ENCODE measurements at regions of chr2 and their contacts with region 1.

Region 1: DNA sequence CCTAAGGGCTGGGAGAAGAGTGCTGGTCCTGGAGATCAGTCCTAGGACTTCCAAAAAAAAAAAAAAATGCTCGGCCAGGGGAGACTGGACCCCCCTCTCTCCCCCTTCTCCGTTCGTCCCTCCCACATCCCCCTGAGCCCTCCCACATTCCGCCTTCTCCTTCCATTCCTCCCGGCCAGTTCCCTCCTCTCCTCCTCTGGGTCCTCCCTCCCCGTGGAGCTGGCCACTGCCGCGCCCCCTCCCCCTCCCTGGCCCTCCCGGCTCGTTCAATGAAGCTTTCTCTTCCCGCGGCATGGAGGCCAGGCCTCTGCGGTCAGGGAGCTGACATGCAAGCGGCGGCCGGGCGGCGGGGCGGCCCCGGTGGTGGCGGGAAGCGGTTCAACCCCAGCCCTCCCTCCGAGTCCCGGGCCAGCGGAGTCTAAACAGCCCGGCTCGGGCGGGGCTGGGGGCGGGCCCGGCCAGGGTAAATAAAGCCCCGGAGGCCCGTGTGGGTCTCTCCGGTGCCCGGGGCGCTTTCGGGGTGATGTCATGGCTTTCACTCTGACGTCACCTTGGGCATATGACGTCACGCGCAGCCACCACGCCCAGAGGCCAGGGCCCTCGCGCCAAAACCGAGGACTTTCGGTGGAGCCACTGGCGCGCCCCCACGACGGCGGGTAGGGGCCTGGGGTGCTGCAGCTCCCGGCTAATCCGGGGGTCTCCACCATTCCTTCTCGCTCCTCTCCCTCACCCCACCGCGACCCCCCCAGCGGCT is at the start of gene LOXL3:
- DNase-seq: peak; percentile 93
- ATAC-seq: peak; percentile 48
- H3K4me3 ChIP-seq: peak within 1 kb of the TSS; percentile 51 to 99 (median 84)
- H3K4me3 Mint-ChIP-seq: peak within 1 kb of the TSS; percentile 96
- H3K27ac ChIP-seq: peak within 1 kb of the TSS; percentile 64 to 76
- H3K27ac Mint-ChIP-seq: peak within 1 kb of the TSS; percentile 94
- H3K4me1 ChIP-seq: peaks cover 16 to 39% of the 10 kb centered on the region in 2 donors
- H3K4me1 Mint-ChIP-seq: peaks cover 24% of the 10 kb centered on the region
- H3K27me3 ChIP-seq: peaks cover 0 to 15% (median 8%) of the 10 kb centered on the region in 4 experiments
- H3K27me3 Mint-ChIP-seq: no peaks in the 10 kb centered on the region
- CTCF ChIP-seq: no peak
- total RNA-seq, gene LOXL3: 0.66 and 1.2 TPM in 2 replicates

Region 2: GRCh38 chr2:74507145-74507925 is 46.7 kb before region 1 on chr2 and contains the start of gene PCGF1:
- CTCF ChIA-PET with region 1: interaction called, 4 read pairs
- POLR2A ChIA-PET with region 1: no interaction called
- intact Hi-C with region 1: loop called (anchors 1 kb)
- DNase-seq: peak; percentile 100
- ATAC-seq: peak; percentile 85
- H3K4me3 ChIP-seq: peak within 1 kb of the TSS; percentile 78 to 97 (median 83)
- H3K4me3 Mint-ChIP-seq: peak within 1 kb of the TSS; percentile 96
- H3K27ac ChIP-seq: peak within 1 kb of the TSS; percentile 91 to 96
- H3K27ac Mint-ChIP-seq: peak within 1 kb of the TSS; percentile 99
- H3K4me1 ChIP-seq: peaks cover 31 to 38% of the 10 kb centered on the region in 2 donors
- H3K4me1 Mint-ChIP-seq: peaks cover 56% of the 10 kb centered on the region
- H3K27me3 ChIP-seq: peaks cover 0 to 56% (median 14%) of the 10 kb centered on the region in 4 experiments
- H3K27me3 Mint-ChIP-seq: peaks cover 41% of the 10 kb centered on the region
- CTCF ChIP-seq: peak; percentile 64
- total RNA-seq, gene PCGF1: 34.3 and 40.1 TPM in 2 replicates

Region 3: GRCh38 chr2:74573747-74574562 is 19.9 kb after region 1 on chr2:
- CTCF ChIA-PET with region 1: interaction called, 4 read pairs
- POLR2A ChIA-PET with region 1: interaction called, 8 read pairs
- intact Hi-C with region 1: loop called (anchors 1 kb)
- DNase-seq: peak; percentile 69
- ATAC-seq: peak; percentile 69
- H3K4me3 ChIP-seq: peak overlapping the region in 4 of 5 experiments; percentile 21 to 34 (median 32)
- H3K4me3 Mint-ChIP-seq: peak overlapping the region; percentile 84
- H3K27ac ChIP-seq: peak overlapping the region; percentile 9 to 74
- H3K27ac Mint-ChIP-seq: peak overlapping the region; percentile 92
- H3K4me1 ChIP-seq: peaks cover 58 to 68% of the 10 kb centered on the region in 2 donors
- H3K4me1 Mint-ChIP-seq: peaks cover 46% of the 10 kb centered on the region
- H3K27me3 ChIP-seq: no peaks in the 10 kb centered on the region
- H3K27me3 Mint-ChIP-seq: no peaks in the 10 kb centered on the region
- CTCF ChIP-seq: no peak

Region 4: DNA sequence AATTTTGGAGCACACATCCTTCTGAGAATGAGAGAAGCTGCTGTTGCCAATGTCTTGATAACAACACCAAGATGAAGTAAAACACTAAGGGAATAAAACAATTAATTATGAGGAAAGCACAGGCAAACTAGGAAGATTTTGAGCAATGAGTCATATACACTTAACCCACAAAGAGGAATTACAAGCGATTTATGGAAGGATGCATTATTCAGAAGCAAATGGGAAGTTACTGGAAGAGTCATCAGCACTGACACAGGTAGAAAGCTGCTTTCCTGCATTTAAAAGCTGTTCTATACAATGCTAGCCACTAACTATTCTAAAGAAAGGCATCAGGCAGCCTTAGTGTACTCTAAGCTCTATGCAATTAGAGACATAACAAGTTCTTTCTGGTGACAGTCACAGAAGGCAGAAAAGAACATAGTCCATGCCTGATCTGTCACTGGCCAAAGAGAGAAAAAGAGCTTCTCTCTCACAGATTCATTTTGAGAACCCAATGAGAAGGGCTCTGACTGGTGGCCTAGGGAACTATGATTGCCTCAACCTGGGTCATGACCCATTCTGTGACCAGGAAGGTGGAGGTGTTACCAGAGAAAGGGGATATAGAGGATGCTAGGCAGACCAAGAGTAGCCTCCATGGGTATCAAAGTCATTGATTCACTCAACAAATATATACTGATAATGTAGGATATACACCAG is 48.7 kb after region 1 on chr2:
- CTCF ChIA-PET with region 1: no interaction called
- POLR2A ChIA-PET with region 1: interaction called, 12 read pairs
- intact Hi-C with region 1: no loop called
- DNase-seq: no peak
- ATAC-seq: no peak
- H3K4me3 ChIP-seq: no peak overlapping the region
- H3K4me3 Mint-ChIP-seq: no peak overlapping the region
- H3K27ac ChIP-seq: no peak overlapping the region
- H3K27ac Mint-ChIP-seq: no peak overlapping the region
- H3K4me1 ChIP-seq: peaks cover 3 to 5% of the 10 kb centered on the region in 2 donors
- H3K4me1 Mint-ChIP-seq: peaks cover 5% of the 10 kb centered on the region
- H3K27me3 ChIP-seq: peaks cover 0 to 19% (median 6%) of the 10 kb centered on the region in 4 experiments
- H3K27me3 Mint-ChIP-seq: peaks cover 18% of the 10 kb centered on the region
- CTCF ChIP-seq: no peak